Adrenal gland (tissue), 19 donors: ENCODE measurements at regions of chr12 and their contacts with region 1.

Region 1: DNA sequence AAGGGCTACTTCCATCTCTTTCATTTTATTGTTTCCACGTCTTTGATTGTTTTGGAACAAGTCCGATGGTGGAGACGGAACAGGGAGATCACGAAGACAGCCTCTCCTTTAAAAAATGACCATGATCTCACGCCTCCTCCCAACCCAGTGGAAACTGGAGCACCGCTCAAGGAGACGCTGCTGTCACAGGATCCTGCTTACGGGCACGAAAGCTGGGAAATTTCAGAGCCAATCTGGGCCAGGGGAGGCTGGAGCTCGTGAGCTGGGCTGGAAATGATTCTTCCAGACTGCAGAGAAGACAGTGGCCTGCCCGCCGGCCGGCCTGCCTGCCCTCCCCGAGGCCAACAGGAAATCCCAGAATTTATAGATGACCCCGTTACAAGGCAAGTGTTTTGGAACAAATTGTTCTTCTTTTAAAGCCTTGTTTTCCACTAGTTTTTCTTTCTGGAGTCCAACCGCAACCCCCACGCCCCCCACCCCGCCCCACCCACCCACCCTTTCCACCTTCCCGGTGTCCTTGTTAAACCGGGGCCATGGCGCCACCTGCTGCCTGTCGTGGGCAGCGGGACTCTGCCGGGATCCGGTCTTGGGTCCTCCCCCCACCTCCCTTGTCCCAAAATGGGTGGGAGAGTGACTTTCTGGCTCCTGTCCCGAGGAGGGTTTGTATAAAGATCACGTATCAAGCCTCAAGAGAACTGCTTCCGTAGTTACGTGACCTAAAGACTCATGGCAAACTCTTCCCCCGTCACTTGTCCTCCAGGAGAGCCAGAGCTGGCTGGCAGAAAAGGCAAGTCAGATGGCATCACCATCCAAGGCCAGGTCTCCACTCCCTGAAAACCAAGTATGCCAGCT is 40.3 kb downstream of the MAP1LC3B2 start:
- DNase-seq: peak; percentile 80 to 91 (median 86)
- H3K4me3 ChIP-seq: peak overlapping the region in 2 of 4 donors; percentile 32 to 53
- H3K27ac ChIP-seq: peak overlapping the region in 3 of 5 donors; percentile 76 to 82 (median 81)
- H3K4me1 ChIP-seq: peaks cover 15 to 21% of the 10 kb centered on the region in 2 donors
- H3K27me3 ChIP-seq: no peaks in the 10 kb centered on the region
- CTCF ChIP-seq: peak; percentile 36 to 62 (median 46)
- POLR2A ChIP-seq: peak in 1 of 2 donors; percentile 39

Region 2: GRCh38 chr12:115998119-115998633 is 601.3 kb before region 1 on chr12:
- intact Hi-C with region 1: loop called (anchors 5 to 10 kb)
- DNase-seq: peak in 1 of 7 donors; percentile 26
- H3K4me3 ChIP-seq: no peak overlapping the region
- H3K27ac ChIP-seq: peak overlapping the region in 1 of 5 donors; percentile 3
- H3K4me1 ChIP-seq: peaks cover 0 to 20% of the 10 kb centered on the region in 2 donors
- H3K27me3 ChIP-seq: no peaks in the 10 kb centered on the region
- CTCF ChIP-seq: peak; percentile 63 to 92 (median 76)
- POLR2A ChIP-seq: no peak

Region 3: DNA sequence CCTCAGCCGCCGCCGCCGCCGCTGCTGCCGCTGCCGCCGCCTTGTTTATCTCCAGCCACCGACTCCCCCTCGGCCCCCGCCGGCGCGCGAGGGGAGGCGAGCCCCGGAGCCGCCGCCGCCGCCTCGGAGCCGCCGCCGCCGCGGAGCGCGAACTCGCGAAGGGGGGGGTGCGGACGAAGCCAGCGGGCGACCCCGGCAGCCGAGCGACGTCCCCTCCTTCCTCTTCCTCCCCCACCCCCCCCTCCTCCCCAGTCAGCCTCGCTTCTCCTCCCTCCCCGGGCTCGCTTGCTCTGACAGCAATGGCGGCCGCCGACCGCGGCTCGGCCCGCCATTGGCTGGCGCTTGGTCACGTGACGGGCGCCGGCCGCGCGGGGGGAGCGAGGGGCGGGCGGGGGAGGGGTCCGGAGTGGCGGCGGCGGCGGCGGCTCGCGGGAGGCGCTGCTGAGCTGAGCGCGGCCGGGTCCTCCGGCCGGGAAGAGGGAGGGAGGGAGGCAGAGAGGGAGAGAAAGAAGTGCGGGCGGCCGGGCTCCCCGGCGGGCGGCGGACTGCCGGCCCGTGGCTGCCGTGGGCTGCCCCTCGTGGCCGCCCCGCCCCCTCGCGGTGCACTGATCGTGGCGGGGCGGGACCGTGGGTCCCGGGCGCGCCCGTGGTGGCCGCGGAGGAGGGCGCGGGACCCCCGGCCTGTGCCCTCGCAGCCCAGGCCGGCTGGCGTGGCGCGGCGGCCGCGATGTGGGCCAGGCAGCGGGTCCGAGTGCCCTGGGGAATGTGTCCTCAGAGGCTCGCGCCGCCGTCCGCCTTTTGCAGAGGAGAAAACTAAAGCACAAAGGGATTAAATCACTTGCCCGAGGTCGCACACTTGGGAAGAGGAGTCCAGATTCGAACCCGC is 321.9 kb before region 1 on chr12 and contains the start of gene MED13L:
- intact Hi-C with region 1: loop called in 1 of 2 experiments (anchors 5 kb)
- DNase-seq: peak; percentile 87 to 92 (median 89)
- H3K4me3 ChIP-seq: peak within 1 kb of the TSS; percentile 16 to 98 (median 52)
- H3K27ac ChIP-seq: peak within 1 kb of the TSS; percentile 52 to 100 (median 92)
- H3K4me1 ChIP-seq: peaks cover 12 to 37% of the 10 kb centered on the region in 2 donors
- H3K27me3 ChIP-seq: no peaks in the 10 kb centered on the region
- CTCF ChIP-seq: peak in 3 of 6 experiments; percentile 39 to 51 (median 44)
- POLR2A ChIP-seq: peak; percentile 41 to 55
- total RNA-seq, gene MED13L: 47.5 to 106 (median 76.5) TPM